ENCODE measurements at regions of chr4 and their contacts with region 1.

Region 1: DNA sequence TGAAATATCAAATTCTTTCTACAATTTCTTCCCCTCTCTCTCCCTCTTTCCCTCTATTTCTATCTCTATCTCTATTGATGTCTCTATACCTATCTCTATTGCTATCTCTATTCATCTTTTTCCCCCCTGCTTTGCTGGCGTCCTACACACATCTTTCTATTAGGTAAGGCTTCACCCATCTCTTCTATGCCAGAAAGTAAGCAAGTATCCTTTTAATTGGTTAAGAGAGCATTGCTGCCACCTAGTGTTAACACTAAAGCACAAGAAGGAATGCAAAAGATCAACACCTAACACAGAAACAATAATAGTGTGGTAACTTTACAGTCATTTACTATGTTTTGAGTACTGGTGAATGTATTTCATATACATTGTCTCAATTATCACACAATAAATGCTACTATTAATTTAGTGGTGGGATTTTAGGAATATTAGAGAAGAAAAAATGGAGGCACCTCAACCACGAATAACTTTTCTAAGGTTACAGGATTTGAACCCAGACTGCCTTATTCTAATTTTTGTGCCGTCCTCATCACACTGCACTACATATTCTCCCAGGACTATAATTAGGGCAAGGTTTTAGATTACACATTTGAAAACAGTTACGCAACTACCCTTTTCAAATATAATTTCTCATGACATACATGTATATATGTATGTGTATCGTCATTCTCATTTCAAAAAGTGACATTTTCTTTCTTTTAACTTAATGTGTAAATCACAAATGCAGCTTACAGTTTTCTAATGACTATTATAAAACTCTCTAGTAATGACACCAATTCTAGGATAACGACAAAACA is 3.7 kb upstream of the C4orf36 start:
- DNase-seq: peak; percentile 46 to 72 (median 50)
- ATAC-seq: peak; percentile 62
- H3K4me3 ChIP-seq: no peak overlapping the region
- H3K27ac ChIP-seq: no peak overlapping the region
- H3K4me1 ChIP-seq: peaks cover 6 to 10% of the 10 kb centered on the region in 2 experiments; a peak in 3 of 5 replicates
- H3K27me3 ChIP-seq: no peaks in the 10 kb centered on the region; a peak in 2 of 5 replicates
- CTCF ChIP-seq: peak; percentile 65 to 85 (median 69); a peak in 5 of 6 replicates
- EP300 ChIP-seq: no peak
- POLR2A ChIP-seq: no peak
- RAD21 ChIP-seq: peak; percentile 80 to 89

Region 2: DNA sequence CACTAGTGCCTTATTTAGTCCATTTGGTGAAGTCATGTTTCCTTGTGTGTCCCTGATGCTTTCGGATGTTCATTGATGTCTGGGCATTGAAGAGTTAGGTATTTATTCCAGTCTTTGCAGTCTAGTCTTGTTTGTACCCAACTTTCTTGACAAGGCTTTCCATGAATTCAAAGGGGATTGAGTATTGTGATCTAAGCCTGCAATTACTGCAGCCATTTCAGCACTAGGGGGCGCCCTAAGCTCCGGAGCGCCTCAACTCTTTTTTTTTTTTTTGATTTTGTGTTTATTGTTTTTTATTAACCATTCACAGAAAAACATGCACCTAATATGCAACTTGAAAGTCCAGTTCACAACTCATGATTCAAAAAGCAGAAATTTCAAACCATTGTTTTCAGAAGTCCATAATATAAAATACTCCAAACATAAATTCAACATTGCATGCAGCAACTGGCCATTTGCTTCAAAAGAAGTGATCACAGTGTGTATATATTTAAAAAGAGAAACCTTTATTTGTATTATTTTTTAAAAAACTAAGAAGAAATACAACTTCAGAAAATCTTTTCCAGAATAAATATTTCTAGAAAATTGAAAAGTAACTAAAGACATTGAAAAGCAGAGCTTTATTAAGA is 242.5 kb before region 1 on chr4:
- CTCF ChIA-PET with region 1: interaction called, 4 read pairs
- POLR2A ChIA-PET with region 1: no interaction called
- in situ Hi-C with region 1: loop called (anchors 5 kb)
- intact Hi-C with region 1: loop called (anchors 2 kb)
- DNase-seq: peak; percentile 36 to 53 (median 44)
- ATAC-seq: no peak
- H3K4me3 ChIP-seq: no peak overlapping the region
- H3K27ac ChIP-seq: no peak overlapping the region
- H3K4me1 ChIP-seq: no peaks in the 10 kb centered on the region
- H3K27me3 ChIP-seq: no peaks in the 10 kb centered on the region
- CTCF ChIP-seq: peak; percentile 59 to 63 (median 62)
- EP300 ChIP-seq: no peak
- POLR2A ChIP-seq: no peak
- RAD21 ChIP-seq: 0 out of 4 replicates have a peak, but pooled peaks of 1 of the 2 experiments have one; percentile 8

Region 3: GRCh38 chr4:86741846-86742245 is 154.0 kb before region 1 on chr4:
- CTCF ChIA-PET with region 1: no interaction called
- POLR2A ChIA-PET with region 1: no interaction called
- in situ Hi-C with region 1: no loop called
- intact Hi-C with region 1: no loop called
- DNase-seq: no peak
- ATAC-seq: no peak
- H3K4me3 ChIP-seq: no peak overlapping the region
- H3K27ac ChIP-seq: no peak overlapping the region
- H3K4me1 ChIP-seq: no peaks in the 10 kb centered on the region
- H3K27me3 ChIP-seq: no peaks in the 10 kb centered on the region; a peak in 1 of 5 replicates
- CTCF ChIP-seq: no peak
- EP300 ChIP-seq: no peak
- POLR2A ChIP-seq: no peak
- RAD21 ChIP-seq: no peak

Region 4: GRCh38 chr4:86778175-86778574 is 117.7 kb before region 1 on chr4:
- CTCF ChIA-PET with region 1: no interaction called
- POLR2A ChIA-PET with region 1: no interaction called
- in situ Hi-C with region 1: no loop called
- intact Hi-C with region 1: no loop called
- DNase-seq: no peak
- ATAC-seq: no peak
- H3K4me3 ChIP-seq: no peak overlapping the region
- H3K27ac ChIP-seq: no peak overlapping the region
- H3K4me1 ChIP-seq: no peaks in the 10 kb centered on the region
- H3K27me3 ChIP-seq: no peaks in the 10 kb centered on the region
- CTCF ChIP-seq: no peak
- EP300 ChIP-seq: no peak
- POLR2A ChIP-seq: no peak
- RAD21 ChIP-seq: no peak

Region 5: DNA sequence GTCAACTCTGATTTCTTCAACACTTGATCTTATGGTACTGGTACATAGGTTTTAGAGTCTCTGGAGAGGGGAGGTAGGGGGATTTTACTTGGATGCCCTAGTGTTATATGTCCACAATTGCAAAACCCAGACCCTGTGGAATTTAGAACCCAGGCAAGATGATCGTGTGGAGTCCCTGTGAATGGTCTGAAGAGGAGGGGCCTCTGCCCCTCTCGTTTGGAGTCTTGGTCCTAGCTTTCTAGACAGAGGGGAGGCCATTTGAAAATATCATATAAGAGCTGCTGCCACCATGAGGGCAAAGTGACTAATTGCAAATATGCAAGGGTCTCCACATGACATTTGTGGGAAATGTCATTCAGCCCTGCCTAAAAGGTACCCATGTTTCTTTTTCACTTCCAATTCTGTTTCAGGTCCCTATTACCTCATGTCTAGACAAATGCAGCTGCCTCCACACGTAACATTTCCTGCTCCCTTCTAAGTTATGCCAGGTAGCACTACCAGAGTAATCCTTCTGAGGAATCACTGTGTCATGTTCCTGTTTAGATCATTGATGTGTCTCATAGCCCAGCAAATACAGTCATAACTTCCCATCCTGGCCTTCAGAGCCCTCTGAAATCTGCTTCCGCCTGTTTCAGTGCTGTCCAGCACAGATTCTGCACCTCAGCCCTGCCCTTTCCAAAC is 197.7 kb after region 1 on chr4:
- CTCF ChIA-PET with region 1: no interaction called
- POLR2A ChIA-PET with region 1: no interaction called
- in situ Hi-C with region 1: no loop called
- intact Hi-C with region 1: loop called (anchors 1 kb)
- DNase-seq: peak; percentile 28 to 68 (median 54)
- ATAC-seq: peak; percentile 83
- H3K4me3 ChIP-seq: no peak overlapping the region
- H3K27ac ChIP-seq: no peak overlapping the region
- H3K4me1 ChIP-seq: peaks cover 5 to 23% of the 10 kb centered on the region in 2 experiments; a peak in 3 of 5 replicates
- H3K27me3 ChIP-seq: no peaks in the 10 kb centered on the region
- CTCF ChIP-seq: peak; percentile 55 to 79 (median 71)
- EP300 ChIP-seq: no peak
- POLR2A ChIP-seq: no peak
- RAD21 ChIP-seq: peak; percentile 56 to 75

Region 6: DNA sequence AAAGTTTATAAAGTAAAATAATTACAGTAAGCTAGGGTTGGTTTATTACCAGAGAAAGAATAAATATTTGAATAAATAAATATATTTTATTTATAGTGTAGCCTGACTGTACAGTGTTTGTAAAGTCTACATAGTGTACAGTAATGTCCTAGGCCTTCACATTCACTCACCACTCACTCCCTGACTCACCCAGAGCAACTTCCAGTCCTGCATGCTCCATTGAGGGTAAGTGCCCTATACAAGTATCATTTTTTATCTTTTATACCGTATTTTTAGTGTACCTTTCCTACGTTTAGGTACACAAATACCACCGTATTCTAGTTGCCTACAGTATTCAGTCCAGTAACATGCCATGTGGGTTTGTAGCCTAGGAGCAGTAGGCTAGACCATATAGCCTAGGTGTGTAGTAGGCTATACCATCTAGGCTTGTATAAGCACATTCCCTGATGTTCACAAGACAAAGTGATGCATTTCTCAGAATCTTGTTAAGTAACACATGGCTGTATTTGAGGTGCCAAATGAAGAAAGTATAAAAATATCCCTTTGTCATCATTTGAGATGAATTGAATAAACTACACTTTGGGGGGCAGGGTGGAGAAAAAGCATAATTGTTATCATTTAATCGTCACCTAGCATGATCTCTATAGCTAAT is 339.3 kb after region 1 on chr4:
- CTCF ChIA-PET with region 1: interaction called, 6 read pairs
- POLR2A ChIA-PET with region 1: no interaction called
- in situ Hi-C with region 1: loop called (anchors 10 kb)
- intact Hi-C with region 1: loop called (anchors 1 kb)
- DNase-seq: no peak
- ATAC-seq: peak; percentile 18; the same call in 2 of the 3 replicates
- H3K4me3 ChIP-seq: peak overlapping the region; percentile 35
- H3K27ac ChIP-seq: no peak overlapping the region; the same call in 2 of the 3 replicates
- H3K4me1 ChIP-seq: peaks cover 0 to 3% of the 10 kb centered on the region in 2 experiments; a peak in 1 of 5 replicates
- H3K27me3 ChIP-seq: no peaks in the 10 kb centered on the region; a peak in 1 of 5 replicates
- CTCF ChIP-seq: no peak
- EP300 ChIP-seq: no peak
- POLR2A ChIP-seq: no peak
- RAD21 ChIP-seq: no peak

Measured in K562 (cell line).